CD14-positive monocyte (primary cell): ENCODE measurements at regions of chr16 and their contacts with region 1.

Region 1: GRCh38 chr16:3457434-3458252 is 14.2 kb downstream of the NAA60 start:
- DNase-seq: peak; percentile 87 to 92 (median 91)
- H3K4me3 ChIP-seq: peak overlapping the region; percentile 63 to 89 (median 71)
- H3K4me3 Mint-ChIP-seq: peak overlapping the region; percentile 76 to 90
- H3K27ac ChIP-seq: peak overlapping the region; percentile 66 to 93
- H3K27ac Mint-ChIP-seq: peak overlapping the region; percentile 23 to 89 (median 80)
- H3K4me1 ChIP-seq: peaks cover 37 to 54% of the 10 kb centered on the region in 2 donors
- H3K4me1 Mint-ChIP-seq: peaks cover 57% of the 10 kb centered on the region
- H3K27me3 ChIP-seq: no peaks in the 10 kb centered on the region
- H3K27me3 Mint-ChIP-seq: peaks cover 0 to 3% (median 2%) of the 10 kb centered on the region in 3 donors
- CTCF ChIP-seq: peak; percentile 56

Region 2: GRCh38 chr16:3150346-3151218 is 307.1 kb before region 1 on chr16:
- intact Hi-C with region 1: loop called in 1 of 2 experiments (anchors 10 kb)
- DNase-seq: peak; percentile 91 to 97 (median 92)
- H3K4me3 ChIP-seq: peak overlapping the region; percentile 65 to 93 (median 74)
- H3K4me3 Mint-ChIP-seq: peak overlapping the region; percentile 87 to 92
- H3K27ac ChIP-seq: peak overlapping the region; percentile 51 to 53
- H3K27ac Mint-ChIP-seq: peak overlapping the region; percentile 71 to 88 (median 80)
- H3K4me1 ChIP-seq: peaks cover 33 to 38% of the 10 kb centered on the region in 2 donors
- H3K4me1 Mint-ChIP-seq: peaks cover 31% of the 10 kb centered on the region
- H3K27me3 ChIP-seq: peaks cover 4 to 41% of the 10 kb centered on the region in 2 donors
- H3K27me3 Mint-ChIP-seq: peaks cover 38 to 55% (median 48%) of the 10 kb centered on the region in 3 donors
- CTCF ChIP-seq: no peak

Region 3: DNA sequence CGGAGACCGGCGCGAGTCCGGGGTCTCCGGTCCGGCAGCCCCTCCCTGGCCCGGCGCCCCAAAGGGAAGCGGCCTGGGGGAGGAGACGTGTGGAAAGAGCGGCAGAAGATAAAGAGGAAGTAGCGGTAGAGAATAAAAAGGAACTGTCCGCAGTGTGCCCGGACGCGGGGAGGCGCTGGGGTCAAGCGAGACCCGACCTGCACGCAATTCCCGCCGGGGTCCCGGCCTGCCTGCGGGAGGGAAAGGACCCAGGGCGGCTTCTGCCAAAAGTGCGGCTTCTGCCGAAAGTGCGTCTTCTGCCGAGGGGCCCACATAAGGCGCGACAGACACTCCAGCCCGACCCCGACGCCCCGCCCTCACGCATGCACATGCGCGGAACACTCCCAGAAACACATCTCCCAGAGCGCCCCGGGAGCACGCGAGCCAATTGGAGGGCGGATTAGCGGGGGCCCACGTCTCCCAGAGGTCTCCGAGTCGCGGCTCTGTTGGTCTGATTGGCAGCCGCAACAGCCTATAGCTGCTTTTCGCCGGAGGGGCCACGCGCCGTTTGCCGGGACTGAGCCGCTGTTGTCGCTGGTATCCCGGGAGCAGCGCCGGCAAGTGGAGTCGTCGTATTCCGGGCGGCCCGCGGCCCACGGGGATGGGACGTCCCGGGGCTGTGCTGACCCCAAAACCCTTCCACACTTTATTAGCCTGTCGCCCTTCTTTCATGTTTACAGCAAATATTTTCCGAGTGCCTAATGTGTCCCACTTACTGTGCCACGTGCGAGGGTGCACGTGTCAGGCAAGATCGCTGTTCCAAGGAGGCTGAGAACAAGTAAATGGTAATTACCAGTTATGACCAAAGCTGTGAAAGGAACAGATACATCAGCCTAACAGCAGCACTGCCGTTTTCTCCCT is 193.3 kb before region 1 on chr16:
- intact Hi-C with region 1: loop called (anchors 5 kb)
- DNase-seq: peak; percentile 90 to 94 (median 92)
- H3K4me3 ChIP-seq: peak overlapping the region; percentile 81 to 89 (median 81)
- H3K4me3 Mint-ChIP-seq: peak overlapping the region; percentile 86 to 91
- H3K27ac ChIP-seq: peak overlapping the region; percentile 99 to 100
- H3K27ac Mint-ChIP-seq: peak overlapping the region; percentile 96 to 100 (median 98)
- H3K4me1 ChIP-seq: peaks cover 54 to 63% of the 10 kb centered on the region in 2 donors
- H3K4me1 Mint-ChIP-seq: peaks cover 68% of the 10 kb centered on the region
- H3K27me3 ChIP-seq: no peaks in the 10 kb centered on the region
- H3K27me3 Mint-ChIP-seq: peaks cover 0 to 6% (median 0%) of the 10 kb centered on the region in 3 donors
- CTCF ChIP-seq: peak; percentile 58

Region 4: DNA sequence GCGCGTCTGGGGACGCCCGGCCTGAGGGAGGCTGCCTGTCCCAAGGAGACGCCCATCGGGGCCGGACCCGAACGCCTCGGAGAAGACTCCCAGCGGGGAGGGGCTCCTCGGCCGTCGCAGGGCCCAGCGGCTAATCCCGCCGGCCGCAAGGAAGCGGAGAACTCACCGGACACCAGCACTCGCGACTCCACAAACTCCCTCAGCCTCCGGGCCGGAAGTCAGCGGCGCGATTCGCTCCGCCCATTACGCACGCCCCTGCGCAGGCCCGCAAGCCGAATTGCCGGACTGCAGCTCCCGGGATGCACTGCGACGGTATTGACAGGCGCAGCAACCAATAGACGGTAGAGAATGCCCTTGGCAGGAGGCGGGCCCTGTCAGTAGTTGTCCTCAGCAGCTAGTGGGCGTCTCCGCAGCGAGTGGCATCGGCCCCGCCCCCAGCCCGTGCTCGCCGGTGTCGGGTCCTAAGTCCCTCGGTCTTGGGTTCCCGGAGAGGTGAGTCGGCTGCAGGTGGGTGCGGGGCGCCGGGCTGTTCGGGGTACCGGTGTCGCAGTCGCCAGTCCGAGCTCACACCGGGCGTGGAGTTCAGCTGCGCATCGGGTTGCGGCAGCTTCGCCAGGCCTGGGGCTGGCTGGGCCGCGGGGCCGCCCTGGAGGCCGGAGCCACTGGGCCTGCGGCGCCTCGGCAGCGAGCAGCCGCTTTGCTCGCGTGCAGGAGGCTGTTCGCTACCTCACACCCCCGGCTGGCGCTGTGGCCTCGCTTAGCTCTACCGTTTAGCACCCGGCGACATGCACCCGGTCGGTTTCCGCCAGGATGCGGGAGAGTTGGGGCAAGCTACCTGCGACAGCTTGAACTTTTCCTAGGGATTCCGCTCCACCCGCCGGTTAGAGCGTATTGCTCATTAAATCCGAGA is 56.6 kb before region 1 on chr16 and contains the starts of genes ZNF174 and ZSCAN32:
- intact Hi-C with region 1: loop called (anchors 2 kb)
- DNase-seq: peak; percentile 98 to 99 (median 98)
- H3K4me3 ChIP-seq: peak within 1 kb of the TSS; percentile 72 to 90 (median 86)
- H3K4me3 Mint-ChIP-seq: peak within 1 kb of the TSS; percentile 85 to 96
- H3K27ac ChIP-seq: peak within 1 kb of the TSS; percentile 39 to 80
- H3K27ac Mint-ChIP-seq: peak within 1 kb of the TSS; percentile 79 to 89 (median 82)
- H3K4me1 ChIP-seq: peaks cover 19 to 30% of the 10 kb centered on the region in 2 donors
- H3K4me1 Mint-ChIP-seq: peaks cover 25% of the 10 kb centered on the region
- H3K27me3 ChIP-seq: no peaks in the 10 kb centered on the region
- H3K27me3 Mint-ChIP-seq: peaks cover 0 to 2% (median 0%) of the 10 kb centered on the region in 3 donors
- CTCF ChIP-seq: no peak
- polyA plus RNA-seq, gene ZNF174: 2.5 to 5.6 (median 4.9) TPM
- polyA plus RNA-seq, gene ZSCAN32: 5.7 to 7.7 (median 7.2) TPM

Region 5: DNA sequence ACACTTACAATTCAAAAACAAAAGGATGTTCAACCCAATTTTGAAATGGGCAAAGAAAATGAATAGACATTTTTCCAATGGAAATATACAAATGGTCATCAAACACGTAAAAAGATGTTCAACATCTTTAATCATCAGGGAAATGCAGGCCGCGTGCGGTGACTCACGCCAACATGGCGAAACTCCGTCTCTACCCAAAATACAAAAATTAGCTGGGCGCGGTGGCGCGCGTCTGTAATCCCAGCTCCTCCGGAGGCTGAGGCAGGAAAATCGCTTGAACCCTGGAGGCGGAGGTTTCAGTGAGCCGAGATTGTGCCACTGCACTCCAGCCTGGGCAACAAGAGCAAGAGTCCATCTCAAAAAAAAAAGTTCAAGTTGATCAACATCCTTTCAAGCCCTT is 41.3 kb after region 1 on chr16:
- intact Hi-C with region 1: loop called in 1 of 2 experiments (anchors 5 kb)
- DNase-seq: no peak
- H3K4me3 ChIP-seq: no peak overlapping the region
- H3K4me3 Mint-ChIP-seq: no peak overlapping the region
- H3K27ac ChIP-seq: no peak overlapping the region
- H3K27ac Mint-ChIP-seq: no peak overlapping the region
- H3K4me1 ChIP-seq: peaks cover 16 to 23% of the 10 kb centered on the region in 2 donors
- H3K4me1 Mint-ChIP-seq: peaks cover 23% of the 10 kb centered on the region
- H3K27me3 ChIP-seq: no peaks in the 10 kb centered on the region
- H3K27me3 Mint-ChIP-seq: peaks cover 4 to 13% (median 6%) of the 10 kb centered on the region in 3 donors
- CTCF ChIP-seq: no peak